Activated CD4-positive, alpha-beta memory T cell treated with anti-CD3 and anti-CD28 coated beads for 36 hours (primary cell): ENCODE measurements at regions of chr5 and their contacts with region 1.

Region 1: GRCh38 chr5:7868773-7869473 is at the starts of genes FASTKD3 and MTRR:
- DNase-seq: peak; percentile 93
- H3K4me3 Mint-ChIP-seq: peak within 1 kb of the TSS; percentile 94
- H3K27ac Mint-ChIP-seq: peak within 1 kb of the TSS; percentile 80
- H3K4me1 Mint-ChIP-seq: peaks cover 72% of the 10 kb centered on the region
- H3K27me3 Mint-ChIP-seq: no peaks in the 10 kb centered on the region
- total RNA-seq, gene FASTKD3: 6.9 to 7.5 TPM
- total RNA-seq, gene MTRR: 45.2 to 47.1 TPM

Region 2: GRCh38 chr5:6496207-6496584 is 1372.7 kb before region 1 on chr5:
- CTCF ChIA-PET with region 1: no interaction called
- POLR2A ChIA-PET with region 1: no interaction called
- intact Hi-C with region 1: loop called (anchors 10 kb)
- DNase-seq: peak; percentile 53
- H3K4me3 Mint-ChIP-seq: no peak overlapping the region
- H3K27ac Mint-ChIP-seq: no peak overlapping the region
- H3K4me1 Mint-ChIP-seq: peaks cover 12% of the 10 kb centered on the region
- H3K27me3 Mint-ChIP-seq: peaks cover 20% of the 10 kb centered on the region

Region 3: GRCh38 chr5:6712577-6713275 is 1156.2 kb before region 1 on chr5:
- CTCF ChIA-PET with region 1: no interaction called
- POLR2A ChIA-PET with region 1: no interaction called
- intact Hi-C with region 1: loop called (anchors 5 kb)
- DNase-seq: peak; percentile 98
- H3K4me3 Mint-ChIP-seq: peak overlapping the region; percentile 81
- H3K27ac Mint-ChIP-seq: peak overlapping the region; percentile 91
- H3K4me1 Mint-ChIP-seq: peaks cover 29% of the 10 kb centered on the region
- H3K27me3 Mint-ChIP-seq: no peaks in the 10 kb centered on the region

Region 4: DNA sequence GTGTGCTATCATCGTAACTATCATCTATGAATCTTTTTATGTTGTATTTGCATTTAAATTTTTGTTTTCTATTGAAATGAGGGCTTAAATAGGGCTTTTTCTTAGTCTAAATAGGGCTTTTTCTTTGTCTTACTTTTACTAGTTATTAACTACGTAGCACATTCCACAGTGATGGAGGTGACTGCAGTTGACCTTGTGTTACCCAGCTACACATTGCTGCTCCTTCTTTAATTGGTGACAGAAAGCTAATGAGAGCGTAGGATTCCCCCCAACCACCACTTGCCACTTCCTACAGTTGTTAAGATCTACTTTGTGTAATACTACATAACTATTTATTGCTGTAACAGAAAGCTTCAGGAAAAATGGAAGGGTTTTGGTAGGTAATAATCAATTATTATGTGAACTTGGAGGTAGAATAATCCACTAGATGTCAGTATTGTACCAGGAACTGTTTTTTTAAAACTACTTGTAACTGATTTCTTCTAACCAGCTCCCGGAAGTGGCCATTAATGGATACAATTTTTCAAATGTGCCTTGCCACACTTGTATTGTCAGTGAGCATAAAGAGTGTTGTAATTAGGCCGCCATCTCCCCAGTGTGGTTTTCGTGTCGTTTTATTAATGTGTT is 18.0 kb after region 1 on chr5:
- CTCF ChIA-PET with region 1: interaction called, 24 read pairs
- POLR2A ChIA-PET with region 1: interaction called, 4 read pairs
- intact Hi-C with region 1: no loop called
- DNase-seq: no peak
- H3K4me3 Mint-ChIP-seq: no peak overlapping the region
- H3K27ac Mint-ChIP-seq: no peak overlapping the region
- H3K4me1 Mint-ChIP-seq: peaks cover 4% of the 10 kb centered on the region
- H3K27me3 Mint-ChIP-seq: no peaks in the 10 kb centered on the region

Region 5: DNA sequence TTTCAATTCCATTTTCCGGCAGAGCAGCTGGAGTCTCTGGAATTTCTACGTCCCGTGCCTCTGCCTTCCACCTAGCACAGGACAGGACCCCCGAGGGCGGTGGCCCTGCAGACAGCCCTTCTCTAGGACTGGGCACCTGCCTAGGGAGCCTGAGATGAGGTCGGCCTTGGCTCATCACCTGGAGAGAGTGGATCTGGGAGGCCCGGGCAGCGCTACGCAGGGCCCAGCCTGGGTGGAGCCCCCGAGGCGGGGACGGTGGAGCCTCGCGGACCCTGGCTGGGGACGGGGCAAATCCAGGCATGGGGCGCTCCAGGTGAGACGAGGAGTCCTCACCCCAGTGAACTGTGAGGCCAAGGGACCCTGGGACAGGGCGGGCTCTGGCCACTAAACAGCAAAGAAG is 114.5 kb after region 1 on chr5:
- CTCF ChIA-PET with region 1: no interaction called
- POLR2A ChIA-PET with region 1: no interaction called
- intact Hi-C with region 1: no loop called
- DNase-seq: no peak
- H3K4me3 Mint-ChIP-seq: no peak overlapping the region
- H3K27ac Mint-ChIP-seq: no peak overlapping the region
- H3K4me1 Mint-ChIP-seq: no peaks in the 10 kb centered on the region
- H3K27me3 Mint-ChIP-seq: peaks cover 2% of the 10 kb centered on the region

Region 6: DNA sequence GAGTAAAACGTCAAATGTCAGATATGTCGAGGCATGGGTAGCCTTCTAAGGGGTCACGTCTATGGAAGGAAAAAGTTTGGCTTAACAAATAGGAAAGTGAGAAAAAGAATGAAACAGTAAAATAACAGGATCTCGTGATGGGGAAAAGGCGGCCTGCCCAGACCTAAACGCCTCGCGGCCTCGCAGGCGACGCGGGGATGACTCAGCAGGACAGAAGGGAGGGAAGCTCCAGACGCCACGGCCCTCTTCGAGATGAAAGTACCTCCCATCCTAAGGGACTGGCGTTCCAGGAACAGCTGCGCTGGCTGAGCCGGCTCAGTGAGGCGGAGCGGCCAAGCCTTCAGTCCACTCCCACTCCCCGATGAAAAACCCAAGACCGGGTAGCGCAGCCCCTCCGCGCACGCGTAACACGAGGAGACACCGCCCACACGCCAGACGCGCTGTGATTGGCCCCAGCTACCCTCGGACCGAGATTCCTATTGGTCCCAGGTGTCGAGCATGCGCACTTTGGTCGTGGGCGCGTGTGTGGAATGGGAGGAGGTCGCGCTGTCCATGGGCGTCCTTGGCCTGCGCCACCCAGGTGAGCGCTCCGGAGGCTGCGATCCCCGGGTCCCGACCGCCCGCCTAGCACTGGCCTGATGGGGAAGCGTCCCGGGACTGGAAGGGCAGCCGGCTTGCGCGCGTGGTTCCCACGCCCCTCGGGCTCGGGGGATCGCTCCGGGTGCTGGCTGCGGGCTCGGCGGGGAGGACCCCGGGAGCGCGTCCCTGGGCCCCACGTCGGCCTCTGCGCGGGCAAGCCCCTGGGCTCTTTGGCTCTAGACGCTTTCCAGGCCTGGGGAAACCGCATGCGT is 588.5 kb after region 1 on chr5:
- CTCF ChIA-PET with region 1: no interaction called
- POLR2A ChIA-PET with region 1: no interaction called
- intact Hi-C with region 1: loop called (anchors 10 kb)
- DNase-seq: peak; percentile 83
- H3K4me3 Mint-ChIP-seq: peak overlapping the region; percentile 75
- H3K27ac Mint-ChIP-seq: peak overlapping the region; percentile 56
- H3K4me1 Mint-ChIP-seq: peaks cover 3% of the 10 kb centered on the region
- H3K27me3 Mint-ChIP-seq: no peaks in the 10 kb centered on the region